ENCODE measurements at regions of chr17 and their contacts with region 1.

Region 1: GRCh38 chr17:12365805-12366204 is 299.9 kb upstream of the MYOCD start:
- DNase-seq: peak; percentile 75 to 83
- ATAC-seq: peak; percentile 83
- H3K4me3 ChIP-seq: no peak overlapping the region
- H3K27ac ChIP-seq: peak overlapping the region; percentile 87 to 95
- H3K4me1 ChIP-seq: peaks cover 0 to 9% of the 10 kb centered on the region in 2 donors
- H3K27me3 ChIP-seq: no peaks in the 10 kb centered on the region

Region 2: GRCh38 chr17:12089809-12090384 is 275.9 kb before region 1 on chr17:
- intact Hi-C with region 1: no loop called
- DNase-seq: no peak
- ATAC-seq: no peak
- H3K4me3 ChIP-seq: no peak overlapping the region
- H3K27ac ChIP-seq: no peak overlapping the region
- H3K4me1 ChIP-seq: peaks cover 5 to 7% of the 10 kb centered on the region in 2 donors
- H3K27me3 ChIP-seq: no peaks in the 10 kb centered on the region

Region 3: DNA sequence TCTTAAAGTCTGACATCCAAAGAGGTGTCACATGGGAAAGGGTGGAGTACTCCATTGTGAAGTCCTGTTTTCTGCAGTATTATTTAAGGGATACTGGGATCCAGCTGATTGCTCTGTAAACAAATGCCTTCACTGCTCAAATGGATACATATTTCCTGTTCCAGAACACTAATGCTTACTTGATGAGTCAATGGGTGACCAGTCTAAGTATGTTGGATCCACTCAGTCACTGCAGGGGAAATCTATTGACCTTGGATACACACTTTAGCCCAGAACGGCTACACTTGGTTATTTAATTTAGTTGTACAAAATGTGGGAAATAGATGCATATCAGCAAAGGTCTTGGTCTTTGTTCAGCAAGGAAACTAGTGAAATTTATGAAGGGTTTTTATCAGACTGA is 83.7 kb before region 1 on chr17:
- intact Hi-C with region 1: loop called in 1 of 2 experiments (anchors 5 kb)
- DNase-seq: no peak
- ATAC-seq: peak; percentile 86
- H3K4me3 ChIP-seq: no peak overlapping the region
- H3K27ac ChIP-seq: peak overlapping the region in 1 of 2 donors; percentile 37
- H3K4me1 ChIP-seq: no peaks in the 10 kb centered on the region
- H3K27me3 ChIP-seq: no peaks in the 10 kb centered on the region

Region 4: GRCh38 chr17:12290207-12290606 is 75.6 kb before region 1 on chr17:
- intact Hi-C with region 1: loop called in 1 of 2 experiments (anchors 5 kb)
- DNase-seq: peak; percentile 74 to 87
- ATAC-seq: peak; percentile 74
- H3K4me3 ChIP-seq: no peak overlapping the region
- H3K27ac ChIP-seq: peak overlapping the region; percentile 29 to 79
- H3K4me1 ChIP-seq: peaks cover 0 to 3% of the 10 kb centered on the region in 2 donors
- H3K27me3 ChIP-seq: no peaks in the 10 kb centered on the region

Region 5: GRCh38 chr17:12301551-12301950 is 64.3 kb before region 1 on chr17:
- intact Hi-C with region 1: no loop called
- DNase-seq: no peak
- ATAC-seq: peak; percentile 64
- H3K4me3 ChIP-seq: no peak overlapping the region
- H3K27ac ChIP-seq: peak overlapping the region; percentile 16 to 92
- H3K4me1 ChIP-seq: peaks cover 2 to 9% of the 10 kb centered on the region in 2 donors
- H3K27me3 ChIP-seq: no peaks in the 10 kb centered on the region

Region 6: GRCh38 chr17:12320286-12320685 is 45.5 kb before region 1 on chr17:
- intact Hi-C with region 1: loop called in 1 of 2 experiments (anchors 5 kb)
- DNase-seq: no peak
- ATAC-seq: no peak
- H3K4me3 ChIP-seq: no peak overlapping the region
- H3K27ac ChIP-seq: peak overlapping the region in 1 of 2 donors; percentile 59
- H3K4me1 ChIP-seq: peaks cover 0 to 6% of the 10 kb centered on the region in 2 donors
- H3K27me3 ChIP-seq: no peaks in the 10 kb centered on the region

Region 7: GRCh38 chr17:12522743-12523183 is 157.0 kb after region 1 on chr17:
- intact Hi-C with region 1: loop called in 1 of 2 experiments (anchors 10 kb)
- DNase-seq: peak in 1 of 2 donors; percentile 47
- ATAC-seq: no peak
- H3K4me3 ChIP-seq: no peak overlapping the region
- H3K27ac ChIP-seq: peak overlapping the region in 1 of 2 donors; percentile 40
- H3K4me1 ChIP-seq: peaks cover 0 to 10% of the 10 kb centered on the region in 2 donors
- H3K27me3 ChIP-seq: no peaks in the 10 kb centered on the region

Region 8: DNA sequence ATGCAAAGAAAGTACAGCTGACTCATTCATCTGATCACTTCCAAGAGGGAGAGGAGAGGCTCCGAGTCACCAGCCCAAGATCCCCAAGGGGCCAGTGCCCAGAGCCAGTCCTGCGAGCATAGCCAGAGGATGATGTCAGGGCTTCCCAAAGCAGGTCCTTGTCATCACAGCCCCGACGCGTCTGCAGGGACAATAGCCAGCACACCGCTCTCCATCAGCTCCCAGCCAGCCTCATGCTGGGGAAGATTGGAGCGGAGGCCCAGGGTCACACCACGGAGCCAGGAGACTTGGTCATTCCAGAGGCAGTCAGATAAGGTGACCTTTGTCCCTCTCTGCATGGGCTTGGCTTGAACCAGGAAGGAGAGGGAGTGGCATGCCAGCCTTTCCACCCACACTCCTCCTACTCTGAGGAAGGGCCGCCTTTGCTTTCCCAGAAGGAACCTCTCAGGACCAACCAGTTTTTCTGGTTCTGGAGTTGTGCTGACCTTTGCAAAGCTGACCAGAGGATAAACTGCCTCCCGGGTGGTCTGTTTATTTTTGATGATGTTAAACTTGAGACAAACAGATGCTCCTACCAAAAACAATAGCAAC is 365.2 kb after region 1 on chr17:
- intact Hi-C with region 1: loop called in 1 of 2 experiments (anchors 10 kb)
- DNase-seq: peak; percentile 92 to 95
- ATAC-seq: peak; percentile 89
- H3K4me3 ChIP-seq: no peak overlapping the region
- H3K27ac ChIP-seq: peak overlapping the region; percentile 6 to 99
- H3K4me1 ChIP-seq: peaks cover 0 to 11% of the 10 kb centered on the region in 2 donors
- H3K27me3 ChIP-seq: no peaks in the 10 kb centered on the region